ENCODE measurements at regions of chr11 and their contacts with region 1.

Region 1: DNA sequence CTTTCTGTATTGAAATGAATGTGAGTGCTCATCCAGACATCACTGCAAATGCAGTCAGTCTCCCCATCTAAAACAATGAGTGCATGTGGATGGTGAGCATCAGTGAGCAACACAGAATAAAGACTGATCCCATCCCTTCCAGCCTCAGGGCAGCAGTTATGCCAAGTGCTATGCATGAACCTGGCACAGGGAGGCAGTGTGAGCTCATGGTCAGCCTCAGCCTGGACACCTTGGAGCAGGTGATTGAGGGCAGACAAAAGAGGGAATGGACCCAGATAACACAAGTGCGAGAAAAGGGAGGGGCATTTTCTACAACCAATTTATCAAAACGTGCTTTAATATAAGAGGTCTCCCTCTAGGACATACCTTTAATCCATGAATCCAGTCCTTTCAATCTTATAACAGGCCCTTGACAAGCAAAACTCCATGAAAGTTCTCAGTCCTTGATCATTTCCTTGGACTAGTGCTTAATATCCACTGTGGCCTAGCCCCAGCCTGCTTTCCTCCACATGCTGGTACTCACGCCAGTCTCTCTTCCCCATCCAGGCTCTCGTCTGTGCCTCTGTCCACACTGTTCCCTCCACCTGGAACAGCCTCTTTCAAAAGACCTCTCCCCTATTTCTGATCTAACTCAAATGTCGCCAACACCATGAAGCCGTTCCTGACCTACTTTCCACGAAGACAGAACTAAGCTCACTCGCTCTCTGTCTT is 50.5 kb upstream of the LRRC55 start:
- H3K4me3 ChIP-seq: no peak overlapping the region
- H3K27ac ChIP-seq: no peak overlapping the region
- H3K4me1 ChIP-seq: no peaks in the 10 kb centered on the region
- CTCF ChIP-seq: no peak

Region 2: DNA sequence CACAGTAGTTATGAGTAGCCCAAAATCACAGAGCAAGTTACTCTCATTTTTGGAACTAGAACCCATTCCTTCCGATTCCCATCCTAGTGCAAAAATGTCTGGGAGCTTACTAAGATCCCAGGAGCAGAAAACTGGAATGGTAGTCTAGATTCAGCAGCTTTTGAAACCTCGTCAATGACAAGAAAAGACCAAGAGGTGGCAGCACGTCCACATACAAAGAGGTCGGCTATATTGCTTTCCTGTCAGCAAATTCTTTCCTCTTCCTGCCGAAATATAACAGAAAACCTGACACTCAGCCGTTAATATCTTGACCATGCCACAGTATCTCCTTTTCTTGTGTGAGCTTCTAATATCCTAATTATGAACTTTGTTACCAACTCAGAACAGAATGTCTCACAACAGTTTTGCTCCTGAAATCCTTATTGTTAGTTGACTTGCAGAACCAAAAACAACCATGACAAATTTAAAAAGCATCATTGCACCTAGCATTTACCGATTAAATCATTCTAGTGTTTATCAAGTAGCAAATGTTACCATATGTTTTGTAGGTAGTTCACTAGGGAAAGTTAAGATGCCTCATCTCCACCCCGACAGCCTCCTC is 289.9 kb before region 1 on chr11:
- CTCF ChIA-PET with region 1: interaction called, 14 read pairs
- POLR2A ChIA-PET with region 1: no interaction called
- H3K4me3 ChIP-seq: no peak overlapping the region
- H3K27ac ChIP-seq: no peak overlapping the region
- H3K4me1 ChIP-seq: no peaks in the 10 kb centered on the region
- CTCF ChIP-seq: no peak

Region 3: DNA sequence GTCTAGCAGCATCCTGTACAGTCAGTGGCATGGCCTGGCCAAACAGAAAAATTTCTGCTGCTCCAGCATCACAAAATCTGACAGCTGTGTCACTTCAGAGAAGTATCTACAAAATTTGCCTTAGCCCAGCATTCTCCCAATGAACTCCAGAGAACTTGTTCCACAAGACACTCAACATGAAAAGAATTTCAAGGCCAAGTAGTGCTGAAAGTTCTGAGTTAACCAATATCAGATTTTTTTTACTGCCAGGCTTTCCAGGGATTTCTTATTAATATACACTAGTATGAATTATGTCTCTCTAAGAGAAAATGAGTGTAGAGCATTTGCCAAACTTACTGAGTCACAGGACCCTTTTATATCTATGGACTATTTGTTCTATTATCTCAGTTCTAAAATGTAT is 73.7 kb before region 1 on chr11:
- CTCF ChIA-PET with region 1: no interaction called
- POLR2A ChIA-PET with region 1: no interaction called
- H3K4me3 ChIP-seq: no peak overlapping the region
- H3K27ac ChIP-seq: no peak overlapping the region
- H3K4me1 ChIP-seq: no peaks in the 10 kb centered on the region
- CTCF ChIP-seq: no peak